Left cardiac atrium (tissue), 4 donors: ENCODE measurements at regions of chr18 and their contacts with region 1.

Region 1: DNA sequence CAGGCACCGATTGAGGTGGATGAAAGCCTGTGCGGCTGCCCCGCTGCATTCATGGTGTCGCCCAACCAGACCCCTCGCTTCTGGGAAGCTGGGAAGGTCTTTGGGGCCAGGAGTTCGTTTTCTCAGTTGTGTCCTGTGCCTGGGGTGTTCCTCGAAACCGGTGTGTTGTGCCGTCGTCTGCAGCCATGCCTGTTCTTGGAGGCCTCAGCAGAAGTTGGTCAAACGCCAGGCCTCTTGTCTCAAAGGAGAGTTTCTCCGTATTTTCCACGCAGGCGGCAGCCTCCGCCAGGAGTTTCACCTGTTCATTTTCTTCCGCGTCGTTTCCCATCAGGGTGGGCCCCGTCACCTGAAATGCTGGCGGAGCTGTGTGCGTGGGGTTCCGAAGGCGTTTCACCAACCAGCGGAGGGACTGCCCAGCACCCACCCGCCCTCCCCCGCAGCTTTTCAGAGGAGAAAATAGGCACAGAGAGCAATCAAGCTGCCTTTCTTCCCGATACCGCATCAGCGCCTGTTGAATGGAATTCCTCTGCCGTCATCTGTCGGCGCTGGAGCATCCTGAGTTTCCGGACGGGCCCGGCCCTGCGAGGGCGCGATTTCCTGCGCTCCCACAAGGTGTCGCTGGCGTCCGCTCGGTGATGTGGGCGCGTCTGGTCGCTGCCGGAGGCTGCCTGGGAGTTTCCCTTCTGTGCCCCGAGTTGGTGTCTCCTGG is 17.0 kb upstream of the NFATC1 start:
- DNase-seq: peak; percentile 85
- ATAC-seq: peak; percentile 81 to 82

Region 2: GRCh38 chr18:79538635-79539034 is 159.9 kb after region 1 on chr18:
- intact Hi-C with region 1: no loop called
- DNase-seq: no peak
- ATAC-seq: no peak

Region 3: GRCh38 chr18:79599441-79599931 is 220.8 kb after region 1 on chr18:
- intact Hi-C with region 1: no loop called
- DNase-seq: peak; percentile 17
- ATAC-seq: no peak

Region 4: GRCh38 chr18:79644006-79644665 is 265.4 kb after region 1 on chr18:
- intact Hi-C with region 1: loop called (anchors 1 to 5 kb)
- DNase-seq: peak; percentile 71
- ATAC-seq: peak; percentile 82 to 87